Heart left ventricle (tissue), 16 donors: ENCODE measurements at regions of chr10 and their contacts with region 1.

Region 1: DNA sequence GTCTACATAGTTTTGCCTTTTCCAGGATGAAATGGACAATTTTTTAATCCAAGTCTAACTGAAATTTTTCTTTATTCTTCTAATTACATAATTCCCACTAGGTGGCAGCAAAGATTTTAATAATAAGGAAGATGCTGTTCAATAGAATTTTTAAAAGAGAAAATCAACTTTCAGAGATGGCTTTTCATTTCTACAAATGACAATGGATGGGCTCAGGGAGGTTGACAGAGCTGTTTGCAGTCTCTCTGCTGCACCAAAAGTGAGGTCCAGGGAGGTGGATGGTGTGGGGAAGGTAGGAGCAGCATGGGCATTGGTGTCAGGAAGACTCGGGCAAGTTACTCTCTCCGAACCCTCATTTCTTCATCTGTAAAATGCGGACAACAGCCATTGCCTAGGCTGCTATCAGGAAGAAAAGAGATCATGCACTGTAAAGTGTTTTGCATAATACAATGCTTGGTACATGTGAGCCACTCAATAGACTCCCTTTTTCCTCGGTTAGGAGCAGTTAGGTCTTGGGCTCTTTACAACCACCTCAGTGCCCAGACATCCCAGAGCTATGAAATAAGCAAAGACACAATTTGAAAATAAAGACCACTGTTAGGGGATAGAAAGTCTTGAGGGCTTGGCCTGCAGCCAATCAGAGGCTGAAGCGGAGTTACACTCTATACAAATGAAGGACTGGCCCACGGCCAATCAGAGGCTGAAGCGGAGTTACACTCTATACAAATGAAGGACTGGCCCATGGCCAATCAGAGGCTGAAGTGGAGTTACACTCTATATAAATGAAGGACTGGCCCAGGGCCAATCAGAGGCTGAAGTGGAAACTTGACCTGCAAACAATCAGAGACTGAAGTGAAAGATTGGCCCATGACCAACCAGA is 107.1 kb downstream of the ABLIM1 start:
- DNase-seq: peak; percentile 58 to 82 (median 72)
- ATAC-seq: peak; percentile 4 to 52 (median 49)
- H3K4me3 ChIP-seq: peak overlapping the region in 7 of 12 donors; percentile 3 to 33 (median 26)
- H3K27ac ChIP-seq: peak overlapping the region; percentile 59 to 89 (median 74)
- H3K4me1 ChIP-seq: peaks cover 0 to 93% (median 53%) of the 10 kb centered on the region in 12 donors
- H3K27me3 ChIP-seq: no peaks in the 10 kb centered on the region
- CTCF ChIP-seq: peak; percentile 25 to 67 (median 54)
- POLR2A ChIP-seq: no peak

Region 2: DNA sequence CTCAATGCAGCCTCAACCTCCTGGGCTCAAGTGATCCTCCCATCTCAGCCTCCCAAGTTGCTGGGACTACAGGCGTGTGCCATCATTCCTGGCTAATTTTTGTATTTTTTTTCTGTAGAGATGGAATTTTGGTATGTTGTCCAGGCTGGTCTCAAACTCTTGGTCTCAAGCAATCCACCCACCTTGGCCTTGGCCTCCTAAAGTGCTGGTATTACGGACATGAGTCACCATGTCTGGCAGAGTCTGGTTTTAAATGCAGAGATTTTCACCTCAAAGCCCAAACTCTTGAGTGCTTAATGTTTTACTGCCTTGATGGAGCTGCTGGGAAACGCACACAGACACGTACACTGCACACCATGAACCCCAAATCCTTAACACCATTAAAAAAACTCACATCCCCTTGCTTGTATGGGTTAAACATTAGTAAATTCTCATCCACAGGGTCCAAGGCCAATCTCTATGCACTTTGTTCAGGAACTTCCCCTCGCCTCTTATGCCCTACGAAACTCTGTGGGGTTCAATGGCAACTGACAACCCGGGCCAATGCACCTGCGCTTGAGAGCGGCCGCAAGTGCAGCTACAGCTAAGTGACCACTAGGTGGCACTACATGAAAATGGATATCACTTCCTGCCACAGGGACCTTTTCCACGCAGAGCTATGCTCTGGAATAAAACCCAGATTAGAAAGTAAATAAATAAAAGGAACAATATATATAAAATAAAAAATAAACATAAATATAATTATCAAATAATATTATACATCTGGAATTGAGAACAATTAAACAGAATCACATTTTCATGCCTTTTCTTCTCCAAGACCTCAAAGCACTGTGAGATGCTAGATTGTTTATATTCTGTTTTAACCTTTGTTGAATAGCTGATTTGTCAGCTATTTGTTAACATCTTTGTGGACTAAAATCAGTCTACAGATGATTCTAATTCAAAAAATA is 79.8 kb before region 1 on chr10:
- intact Hi-C with region 1: loop called in 7 of 10 experiments (anchors 2 to 5 kb)
- DNase-seq: peak; percentile 59 to 77 (median 63)
- ATAC-seq: peak; percentile 52 to 81 (median 74)
- H3K4me3 ChIP-seq: no peak overlapping the region
- H3K27ac ChIP-seq: peak overlapping the region in 8 of 12 donors; percentile 9 to 60 (median 28)
- H3K4me1 ChIP-seq: peaks cover 0 to 46% (median 17%) of the 10 kb centered on the region in 12 donors
- H3K27me3 ChIP-seq: no peaks in the 10 kb centered on the region
- CTCF ChIP-seq: peak; percentile 83 to 96 (median 92)
- POLR2A ChIP-seq: no peak

Region 3: DNA sequence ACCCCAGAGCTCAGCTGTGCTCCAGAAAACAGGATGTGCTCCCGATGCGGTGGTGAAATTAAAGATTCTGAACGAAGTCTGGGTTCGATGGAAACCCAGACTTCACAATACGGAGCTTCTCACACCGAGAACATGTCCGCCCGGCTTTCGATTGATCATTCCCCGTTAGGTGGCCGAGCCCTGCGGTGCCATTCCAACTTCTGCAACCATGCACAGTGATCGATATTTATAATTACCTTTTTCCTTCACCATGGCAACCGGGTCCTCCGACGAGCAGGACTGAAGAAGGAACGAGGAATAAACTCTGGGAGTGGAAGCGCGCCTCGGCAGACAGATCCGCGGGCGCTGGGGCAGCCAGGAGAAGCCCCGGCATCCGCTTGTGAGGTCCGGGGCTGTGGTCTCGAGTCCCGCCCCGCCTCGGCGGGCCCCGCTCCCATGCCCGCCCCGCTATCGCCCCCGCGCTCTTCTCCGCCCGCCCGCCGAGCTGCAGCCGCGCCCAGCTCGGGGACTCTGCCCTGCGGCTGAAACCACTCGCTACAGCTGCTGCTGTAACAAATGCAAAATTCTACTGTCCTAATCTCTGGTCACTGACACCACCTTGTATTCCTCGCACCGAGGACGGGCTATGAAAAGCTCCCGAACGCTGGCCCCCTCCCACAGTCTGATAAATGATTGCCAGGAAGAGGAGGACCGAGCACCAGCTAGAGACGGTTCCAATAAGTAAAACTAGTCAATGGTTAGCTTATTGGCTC is 80.8 kb after region 1 on chr10:
- intact Hi-C with region 1: loop called in 3 of 10 experiments (anchors 5 kb)
- DNase-seq: peak; percentile 52 to 71 (median 67)
- ATAC-seq: peak; percentile 17 to 68 (median 56)
- H3K4me3 ChIP-seq: peak overlapping the region; percentile 40 to 85 (median 68)
- H3K27ac ChIP-seq: peak overlapping the region; percentile 80 to 96 (median 90)
- H3K4me1 ChIP-seq: peaks cover 0 to 87% (median 50%) of the 10 kb centered on the region in 12 donors
- H3K27me3 ChIP-seq: peaks cover 0 to 21% (median 0%) of the 10 kb centered on the region in 9 donors
- CTCF ChIP-seq: no peak
- POLR2A ChIP-seq: peak in 1 of 2 donors; percentile 49

Region 4: DNA sequence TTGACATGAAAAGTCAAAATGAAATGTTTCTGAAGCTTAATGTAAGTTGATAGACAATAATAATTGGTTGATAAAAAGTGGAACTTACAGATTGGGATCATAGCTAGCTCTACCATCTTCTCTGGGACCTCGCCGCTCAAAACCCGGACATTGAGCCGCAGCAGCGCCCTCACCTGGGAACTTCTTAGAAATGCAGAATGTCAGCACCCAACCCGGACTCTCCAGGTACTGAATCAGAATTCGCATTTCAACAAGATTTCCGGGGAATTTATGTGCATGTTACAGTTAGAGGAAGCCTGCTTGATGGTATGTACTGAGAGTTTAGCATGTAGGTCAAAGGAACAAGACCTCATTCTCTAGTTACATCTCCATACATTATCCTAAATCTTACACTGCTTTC is 143.8 kb after region 1 on chr10:
- intact Hi-C with region 1: loop called in 6 of 10 experiments (anchors 5 to 10 kb)
- DNase-seq: no peak
- ATAC-seq: no peak
- H3K4me3 ChIP-seq: no peak overlapping the region
- H3K27ac ChIP-seq: peak overlapping the region in 8 of 12 donors; percentile 12 to 78 (median 42)
- H3K4me1 ChIP-seq: peaks cover 4 to 68% (median 47%) of the 10 kb centered on the region in 12 donors
- H3K27me3 ChIP-seq: no peaks in the 10 kb centered on the region
- CTCF ChIP-seq: peak in 11 of 12 donors; percentile 21 to 56 (median 37)
- POLR2A ChIP-seq: no peak

Region 5: GRCh38 chr10:114708717-114709335 is 157.8 kb after region 1 on chr10:
- intact Hi-C with region 1: loop called in 4 of 10 experiments (anchors 5 kb)
- DNase-seq: no peak
- ATAC-seq: no peak
- H3K4me3 ChIP-seq: no peak overlapping the region
- H3K27ac ChIP-seq: peak overlapping the region in 5 of 12 donors; percentile 15 to 59 (median 27)
- H3K4me1 ChIP-seq: peaks cover 6 to 84% (median 33%) of the 10 kb centered on the region in 12 donors
- H3K27me3 ChIP-seq: no peaks in the 10 kb centered on the region
- CTCF ChIP-seq: no peak
- POLR2A ChIP-seq: no peak

Region 6: GRCh38 chr10:114767101-114767985 is 216.3 kb after region 1 on chr10:
- intact Hi-C with region 1: loop called in 2 of 10 experiments (anchors 5 kb)
- DNase-seq: peak; percentile 47 to 68 (median 52)
- ATAC-seq: peak in 3 of 4 donors; percentile 77 to 78 (median 77)
- H3K4me3 ChIP-seq: peak overlapping the region; percentile 73 to 97 (median 86)
- H3K27ac ChIP-seq: peak overlapping the region; percentile 79 to 95 (median 92)
- H3K4me1 ChIP-seq: peaks cover 0 to 50% (median 18%) of the 10 kb centered on the region in 12 donors
- H3K27me3 ChIP-seq: peaks cover 0 to 22% (median 0%) of the 10 kb centered on the region in 9 donors
- CTCF ChIP-seq: no peak
- POLR2A ChIP-seq: no peak

Region 7: GRCh38 chr10:114779803-114780609 is 229.0 kb after region 1 on chr10:
- intact Hi-C with region 1: loop called in 7 of 10 experiments (anchors 2 to 5 kb)
- DNase-seq: no peak
- ATAC-seq: peak in 2 of 4 donors; percentile 38 to 70
- H3K4me3 ChIP-seq: no peak overlapping the region
- H3K27ac ChIP-seq: peak overlapping the region in 9 of 12 donors; percentile 7 to 50 (median 27)
- H3K4me1 ChIP-seq: peaks cover 0 to 37% (median 11%) of the 10 kb centered on the region in 12 donors
- H3K27me3 ChIP-seq: no peaks in the 10 kb centered on the region
- CTCF ChIP-seq: no peak
- POLR2A ChIP-seq: no peak